WTC11 (cell line): ENCODE measurements at regions of chr11 and their contacts with region 1.

Region 1: GRCh38 chr11:112795142-112795815 is 165.9 kb upstream of the NCAM1 start:
- DNase-seq: peak; percentile 67
- ATAC-seq: peak; percentile 60
- H3K4me3 Mint-ChIP-seq: no peak overlapping the region
- H3K27ac Mint-ChIP-seq: no peak overlapping the region
- H3K4me1 Mint-ChIP-seq: peaks cover 50% of the 10 kb centered on the region
- H3K27me3 Mint-ChIP-seq: no peaks in the 10 kb centered on the region; the same call in 1 of the 2 replicates
- CTCF ChIP-seq: peak; percentile 70

Region 2: DNA sequence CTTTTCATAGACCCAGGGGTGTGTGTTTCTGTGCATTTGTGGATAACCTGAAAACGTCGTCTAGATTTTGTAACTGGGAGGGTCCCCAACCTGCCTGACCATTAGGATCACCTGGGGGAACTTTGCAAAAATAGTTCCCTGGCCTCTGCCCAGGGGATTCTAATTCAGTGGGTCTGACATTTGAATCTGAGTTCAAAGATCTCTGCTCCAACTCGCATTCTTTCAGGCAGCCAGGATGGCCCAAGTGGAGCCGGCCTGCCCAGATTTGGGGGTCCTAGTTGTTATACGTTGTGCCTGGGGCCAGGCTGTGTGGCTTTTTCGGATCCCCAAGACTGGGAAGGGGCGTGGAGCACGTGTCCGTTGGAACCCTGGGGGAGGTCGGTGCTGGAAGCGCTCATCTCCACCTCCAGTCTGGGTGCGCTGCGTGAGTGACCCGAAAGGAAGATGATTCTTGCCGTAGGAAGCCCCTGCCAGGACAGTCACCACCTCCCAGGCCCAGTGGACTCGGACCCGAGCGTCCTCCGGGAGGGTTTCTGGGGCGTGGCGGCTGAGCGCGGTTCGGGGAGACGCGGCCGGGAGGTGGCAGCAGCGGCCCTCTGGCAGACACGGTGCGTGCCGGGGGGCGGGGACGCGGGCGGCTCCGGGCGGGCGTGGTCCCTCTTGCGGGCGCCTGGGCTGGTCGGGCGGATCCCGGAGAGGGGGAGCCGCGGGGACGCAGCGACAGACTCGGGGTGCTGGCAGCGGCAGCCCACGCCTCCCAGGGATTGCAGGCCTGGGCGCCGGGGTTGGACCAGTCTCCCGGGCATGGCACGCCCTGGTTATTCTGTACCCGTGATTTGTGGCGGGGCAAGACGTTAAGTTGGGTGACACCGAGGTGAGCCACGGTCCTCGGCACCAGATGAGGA is 505.4 kb before region 1 on chr11:
- CTCF ChIA-PET with region 1: no interaction called
- POLR2A ChIA-PET with region 1: no interaction called
- DNase-seq: peak; percentile 87
- ATAC-seq: peak; percentile 94
- H3K4me3 Mint-ChIP-seq: peak overlapping the region; percentile 75
- H3K27ac Mint-ChIP-seq: no peak overlapping the region
- H3K4me1 Mint-ChIP-seq: peaks cover 13% of the 10 kb centered on the region
- H3K27me3 Mint-ChIP-seq: peaks cover 29% of the 10 kb centered on the region
- CTCF ChIP-seq: peak; percentile 40

Region 3: DNA sequence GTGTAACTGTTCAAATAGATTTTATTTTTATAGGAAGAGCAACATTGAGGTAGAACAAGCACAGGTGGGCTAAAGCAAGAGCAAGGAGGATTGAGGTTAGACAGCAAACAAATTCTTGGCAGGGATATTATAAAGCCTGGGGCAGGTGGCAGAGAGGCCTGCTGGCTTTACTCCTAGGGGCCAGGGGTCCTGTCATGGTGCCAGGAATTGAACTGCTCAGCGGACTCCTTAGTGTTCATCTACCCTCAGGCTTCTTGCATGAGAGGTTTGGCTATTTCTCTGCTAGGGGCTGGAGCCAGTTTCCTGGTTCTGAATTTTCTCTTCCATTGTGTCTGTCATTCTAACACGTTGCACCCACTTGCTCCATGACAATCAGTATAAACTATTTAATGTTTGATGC is 51.2 kb before region 1 on chr11:
- CTCF ChIA-PET with region 1: no interaction called
- POLR2A ChIA-PET with region 1: no interaction called
- DNase-seq: no peak
- ATAC-seq: no peak
- H3K4me3 Mint-ChIP-seq: no peak overlapping the region
- H3K27ac Mint-ChIP-seq: no peak overlapping the region
- H3K4me1 Mint-ChIP-seq: peaks cover 6% of the 10 kb centered on the region
- H3K27me3 Mint-ChIP-seq: peaks cover 2% of the 10 kb centered on the region; the same call in 1 of the 2 replicates
- CTCF ChIP-seq: no peak

Region 4: GRCh38 chr11:112784323-112785073 is 10.8 kb before region 1 on chr11:
- CTCF ChIA-PET with region 1: interaction called, 23 read pairs
- POLR2A ChIA-PET with region 1: no interaction called
- DNase-seq: no peak
- ATAC-seq: peak; percentile 61
- H3K4me3 Mint-ChIP-seq: no peak overlapping the region
- H3K27ac Mint-ChIP-seq: no peak overlapping the region
- H3K4me1 Mint-ChIP-seq: peaks cover 29% of the 10 kb centered on the region
- H3K27me3 Mint-ChIP-seq: peaks cover 7% of the 10 kb centered on the region
- CTCF ChIP-seq: no peak

Region 5: DNA sequence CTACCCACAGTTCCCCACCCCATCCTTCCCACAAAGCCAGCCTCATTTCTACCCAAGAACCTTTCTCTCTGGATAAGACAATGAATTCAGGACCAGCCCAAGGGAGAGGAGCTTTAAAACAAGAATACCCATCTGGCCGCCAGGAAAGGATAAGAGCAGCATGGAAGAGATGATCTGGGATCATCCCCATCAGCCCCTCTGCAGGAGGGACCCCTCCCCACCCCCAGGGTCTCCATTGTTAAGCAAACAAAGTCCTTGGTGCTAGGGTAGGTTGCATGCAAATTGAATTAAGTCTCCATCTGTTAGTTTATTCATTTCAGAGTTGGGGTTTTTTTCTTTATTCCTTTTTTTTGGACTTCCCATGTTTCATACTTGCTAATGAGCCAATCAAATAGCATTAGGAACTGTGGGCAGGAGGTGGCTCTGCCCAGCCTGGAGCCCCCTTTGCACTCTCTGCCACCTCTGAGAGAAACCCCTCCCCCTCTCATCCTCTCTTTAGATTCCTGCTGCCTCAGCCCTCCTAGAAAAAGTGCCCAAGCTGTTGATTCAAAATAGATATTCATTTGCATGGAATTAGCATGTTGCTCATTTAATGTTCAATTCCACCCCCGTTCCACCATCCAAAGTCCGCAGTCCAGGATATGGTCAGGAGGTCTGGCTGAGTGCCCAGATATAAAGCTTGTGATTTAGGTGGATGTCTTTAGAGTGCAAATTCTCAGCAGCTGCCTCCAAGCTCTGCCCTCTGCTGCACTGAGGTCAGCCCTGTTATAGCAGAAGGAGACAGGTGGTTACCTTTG is 27.4 kb after region 1 on chr11:
- CTCF ChIA-PET with region 1: interaction called, 12 read pairs
- POLR2A ChIA-PET with region 1: interaction called, 3 read pairs
- DNase-seq: peak; percentile 77
- ATAC-seq: peak; percentile 85
- H3K4me3 Mint-ChIP-seq: peak overlapping the region; percentile 47
- H3K27ac Mint-ChIP-seq: peak overlapping the region; percentile 85
- H3K4me1 Mint-ChIP-seq: peaks cover 86% of the 10 kb centered on the region
- H3K27me3 Mint-ChIP-seq: peaks cover 39% of the 10 kb centered on the region
- CTCF ChIP-seq: no peak

Region 6: GRCh38 chr11:112837162-112837826 is 42.0 kb after region 1 on chr11:
- CTCF ChIA-PET with region 1: interaction called, 11 read pairs
- POLR2A ChIA-PET with region 1: no interaction called
- DNase-seq: no peak
- ATAC-seq: peak; percentile 83
- H3K4me3 Mint-ChIP-seq: no peak overlapping the region
- H3K27ac Mint-ChIP-seq: no peak overlapping the region
- H3K4me1 Mint-ChIP-seq: peaks cover 7% of the 10 kb centered on the region; the same call in 1 of the 2 replicates
- H3K27me3 Mint-ChIP-seq: peaks cover 2% of the 10 kb centered on the region
- CTCF ChIP-seq: no peak

Region 7: DNA sequence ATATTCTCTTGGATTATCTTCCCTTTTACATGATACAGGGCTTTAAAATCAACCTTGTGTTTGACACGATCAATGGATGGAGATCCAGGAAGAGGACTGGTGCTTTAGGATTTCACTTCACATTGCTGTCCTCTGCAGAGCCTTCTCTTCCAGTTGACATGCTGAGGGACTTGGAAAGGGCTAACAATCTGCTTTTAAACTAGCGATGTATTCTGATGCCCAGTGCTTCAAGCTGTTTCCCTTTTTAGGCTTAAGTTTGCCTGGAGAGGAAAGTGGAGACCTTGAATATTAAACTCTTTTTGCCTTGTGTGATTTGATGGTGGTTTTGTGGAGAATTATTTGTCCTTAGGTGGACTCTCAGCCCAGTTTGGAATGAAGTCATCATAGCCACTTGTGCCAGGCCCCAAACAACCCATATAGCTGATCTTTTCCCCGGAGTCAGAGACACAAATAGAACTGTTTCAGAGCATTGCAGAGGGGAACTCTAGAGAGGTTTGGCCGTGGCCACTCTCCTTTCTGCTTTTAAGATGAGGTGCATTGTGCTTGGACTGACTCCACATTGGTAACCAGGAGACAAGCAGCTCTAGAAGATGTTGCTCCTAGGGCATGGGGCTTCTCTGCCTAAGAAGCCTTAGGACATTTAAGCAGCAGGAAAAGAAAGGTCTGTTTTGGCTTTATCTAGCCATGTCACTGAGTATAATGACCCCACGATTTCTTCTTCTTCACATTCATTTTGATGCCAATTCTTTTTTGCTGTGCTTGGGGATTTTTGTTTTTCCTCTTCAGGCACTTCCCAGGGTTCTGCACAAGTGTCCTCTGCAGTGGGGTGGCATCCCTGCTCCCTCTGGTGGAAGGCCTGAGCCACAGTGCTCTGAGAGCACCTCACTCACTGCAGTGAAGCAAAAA is 318.8 kb after region 1 on chr11:
- CTCF ChIA-PET with region 1: interaction called, 15 read pairs
- POLR2A ChIA-PET with region 1: no interaction called
- DNase-seq: peak; percentile 62
- ATAC-seq: peak; percentile 99
- H3K4me3 Mint-ChIP-seq: no peak overlapping the region
- H3K27ac Mint-ChIP-seq: no peak overlapping the region
- H3K4me1 Mint-ChIP-seq: peaks cover 5% of the 10 kb centered on the region
- H3K27me3 Mint-ChIP-seq: no peaks in the 10 kb centered on the region
- CTCF ChIP-seq: peak; percentile 33; the same call in 1 of the 2 replicates